Activated T-helper 1 cell treated with anti-CD3 and anti-CD28 coated beads, Interleukin-12 subunit alpha, Interleukin-12 subunit beta, Interleukin-2, Interleukin-4 antibody, amounts not matched to agents 30 ng/mL and 10 ng/mL and 1 ng/mL, durations not matched to agents 14 hours and 24 hours and 36 hours (primary cell): ENCODE measurements at regions of chr18 and their contacts with region 1.

Region 1: DNA sequence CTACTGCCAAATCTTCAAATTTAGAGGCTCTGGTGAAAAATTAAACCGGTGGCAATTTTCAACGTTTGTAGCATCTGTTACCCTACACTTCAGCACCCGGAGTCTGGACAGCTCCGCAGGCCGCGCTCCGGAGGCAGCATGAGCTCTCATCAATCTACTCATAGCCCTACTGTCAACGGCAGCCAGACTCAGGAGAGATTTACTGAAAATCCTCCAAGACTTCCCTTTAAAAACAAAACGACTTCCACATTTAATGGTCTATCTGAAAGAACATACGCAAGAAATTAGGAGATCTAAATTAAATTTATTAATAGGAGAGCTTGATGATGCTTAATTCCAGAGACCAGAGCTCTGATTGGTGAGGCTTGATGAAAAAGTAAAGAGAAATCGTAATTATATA is 970 bp upstream of the ADCYAP1 start:
- DNase-seq: peak; percentile 22
- H3K4me3 Mint-ChIP-seq: no peak overlapping the region
- H3K27ac Mint-ChIP-seq: peak overlapping the region; percentile 34
- H3K4me1 Mint-ChIP-seq: peaks cover 4% of the 10 kb centered on the region
- H3K27me3 Mint-ChIP-seq: peaks cover 65% of the 10 kb centered on the region

Region 2: GRCh38 chr18:961644-962355 is 58.1 kb after region 1 on chr18:
- intact Hi-C with region 1: loop called (anchors 5 kb)
- DNase-seq: peak; percentile 5
- H3K4me3 Mint-ChIP-seq: no peak overlapping the region
- H3K27ac Mint-ChIP-seq: no peak overlapping the region
- H3K4me1 Mint-ChIP-seq: no peaks in the 10 kb centered on the region
- H3K27me3 Mint-ChIP-seq: peaks cover 11% of the 10 kb centered on the region

Region 3: GRCh38 chr18:1037776-1038175 is 134.1 kb after region 1 on chr18:
- intact Hi-C with region 1: no loop called
- DNase-seq: no peak
- H3K4me3 Mint-ChIP-seq: no peak overlapping the region
- H3K27ac Mint-ChIP-seq: no peak overlapping the region
- H3K4me1 Mint-ChIP-seq: no peaks in the 10 kb centered on the region
- H3K27me3 Mint-ChIP-seq: no peaks in the 10 kb centered on the region

Region 4: GRCh38 chr18:1227025-1227424 is 323.3 kb after region 1 on chr18:
- intact Hi-C with region 1: no loop called
- DNase-seq: no peak
- H3K4me3 Mint-ChIP-seq: no peak overlapping the region
- H3K27ac Mint-ChIP-seq: no peak overlapping the region
- H3K4me1 Mint-ChIP-seq: no peaks in the 10 kb centered on the region
- H3K27me3 Mint-ChIP-seq: no peaks in the 10 kb centered on the region